Activated CD4-positive, alpha-beta T cell treated with anti-CD3 and anti-CD28 coated beads for 36 hours (primary cell): ENCODE measurements at regions of chr4 and their contacts with region 1.

Region 1: GRCh38 chr4:154551872-154552686 is 1.9 kb upstream of the PLRG1 start:
- DNase-seq: peak; percentile 81
- ATAC-seq: peak; percentile 47
- H3K4me3 Mint-ChIP-seq: no peak overlapping the region
- H3K27ac Mint-ChIP-seq: no peak overlapping the region
- H3K4me1 Mint-ChIP-seq: peaks cover 20% of the 10 kb centered on the region
- H3K27me3 Mint-ChIP-seq: peaks cover 2% of the 10 kb centered on the region

Region 2: GRCh38 chr4:153785910-153786721 is 766.0 kb before region 1 on chr4:
- CTCF ChIA-PET with region 1: no interaction called
- POLR2A ChIA-PET with region 1: no interaction called
- intact Hi-C with region 1: loop called in 1 of 2 experiments (anchors 5 kb)
- DNase-seq: no peak
- ATAC-seq: no peak
- H3K4me3 Mint-ChIP-seq: no peak overlapping the region
- H3K27ac Mint-ChIP-seq: no peak overlapping the region
- H3K4me1 Mint-ChIP-seq: peaks cover 27% of the 10 kb centered on the region
- H3K27me3 Mint-ChIP-seq: peaks cover 65% of the 10 kb centered on the region

Region 3: GRCh38 chr4:154491341-154492271 is 60.5 kb before region 1 on chr4 and contains the start of gene DCHS2:
- CTCF ChIA-PET with region 1: interaction called, 6 read pairs
- POLR2A ChIA-PET with region 1: no interaction called
- intact Hi-C with region 1: loop called in 1 of 2 experiments (anchors 1 kb)
- DNase-seq: peak; percentile 55
- ATAC-seq: peak; percentile 71
- H3K4me3 Mint-ChIP-seq: peak within 1 kb of the TSS; percentile 67
- H3K27ac Mint-ChIP-seq: no peak within 1 kb of the TSS
- H3K4me1 Mint-ChIP-seq: peaks cover 18% of the 10 kb centered on the region
- H3K27me3 Mint-ChIP-seq: peaks cover 55% of the 10 kb centered on the region
- total RNA-seq, gene DCHS2: 0.05 to 0.14 TPM

Region 4: DNA sequence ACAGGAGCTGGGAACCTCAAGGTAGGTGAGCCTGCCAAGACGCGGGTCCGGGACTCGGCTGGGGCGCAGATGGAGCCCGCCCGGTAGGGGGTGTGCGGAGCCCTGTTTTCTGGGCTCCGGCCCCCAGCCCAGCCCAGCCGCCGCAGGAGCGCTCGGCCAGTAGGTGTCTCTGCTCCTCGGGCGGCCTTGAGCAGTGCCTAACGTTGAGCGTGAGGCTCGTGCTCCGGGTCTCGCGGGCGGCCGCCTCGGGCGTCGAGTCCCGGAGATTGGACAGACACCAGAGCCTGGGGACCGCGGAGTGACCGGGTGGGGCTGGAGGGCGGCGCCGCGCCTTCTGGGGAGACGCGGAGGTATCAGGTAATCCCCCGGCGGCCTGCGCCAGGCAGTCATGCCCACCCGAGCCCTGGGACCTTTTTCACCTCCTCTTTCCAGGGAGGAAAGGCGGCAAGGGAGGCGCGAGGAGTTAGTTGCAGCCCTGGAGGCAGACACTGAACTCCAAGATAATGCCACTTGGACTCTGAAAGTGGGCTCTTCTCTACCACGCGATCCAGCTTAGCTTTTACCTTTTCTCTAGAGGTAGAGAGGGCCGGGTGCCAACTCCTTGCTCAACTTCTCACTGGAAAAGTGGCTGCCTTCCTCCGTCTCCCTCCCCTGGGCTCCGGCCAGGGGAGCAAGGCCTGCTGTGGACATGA is 74.9 kb after region 1 on chr4:
- CTCF ChIA-PET with region 1: interaction called, 67 read pairs
- POLR2A ChIA-PET with region 1: no interaction called
- intact Hi-C with region 1: loop called (anchors 1 kb)
- DNase-seq: peak; percentile 80
- ATAC-seq: peak; percentile 98
- H3K4me3 Mint-ChIP-seq: no peak overlapping the region
- H3K27ac Mint-ChIP-seq: no peak overlapping the region
- H3K4me1 Mint-ChIP-seq: no peaks in the 10 kb centered on the region
- H3K27me3 Mint-ChIP-seq: peaks cover 13% of the 10 kb centered on the region

Region 5: DNA sequence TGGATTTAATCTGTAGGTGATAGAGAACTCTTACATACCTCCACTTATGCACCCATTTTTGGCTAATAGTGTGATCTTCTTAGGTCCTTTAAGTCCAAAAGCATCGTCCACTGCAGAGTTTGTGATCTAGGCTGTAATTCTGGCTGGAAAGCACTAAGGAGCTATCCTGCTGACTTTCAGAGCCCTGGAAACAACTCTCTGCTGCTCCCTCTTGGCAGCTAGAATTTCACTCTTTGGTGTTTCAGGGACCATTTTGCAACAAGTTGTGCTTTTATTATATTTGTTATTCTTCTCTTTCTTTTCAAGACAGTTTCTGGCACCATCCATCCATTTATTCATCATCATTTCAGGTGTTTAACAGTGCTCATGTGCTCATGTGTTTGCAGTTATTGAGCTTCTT is 359.0 kb after region 1 on chr4:
- CTCF ChIA-PET with region 1: no interaction called
- POLR2A ChIA-PET with region 1: no interaction called
- intact Hi-C with region 1: no loop called
- DNase-seq: no peak
- ATAC-seq: no peak
- H3K4me3 Mint-ChIP-seq: no peak overlapping the region
- H3K27ac Mint-ChIP-seq: no peak overlapping the region
- H3K4me1 Mint-ChIP-seq: no peaks in the 10 kb centered on the region
- H3K27me3 Mint-ChIP-seq: peaks cover under 1% of the 10 kb centered on the region

Region 6: DNA sequence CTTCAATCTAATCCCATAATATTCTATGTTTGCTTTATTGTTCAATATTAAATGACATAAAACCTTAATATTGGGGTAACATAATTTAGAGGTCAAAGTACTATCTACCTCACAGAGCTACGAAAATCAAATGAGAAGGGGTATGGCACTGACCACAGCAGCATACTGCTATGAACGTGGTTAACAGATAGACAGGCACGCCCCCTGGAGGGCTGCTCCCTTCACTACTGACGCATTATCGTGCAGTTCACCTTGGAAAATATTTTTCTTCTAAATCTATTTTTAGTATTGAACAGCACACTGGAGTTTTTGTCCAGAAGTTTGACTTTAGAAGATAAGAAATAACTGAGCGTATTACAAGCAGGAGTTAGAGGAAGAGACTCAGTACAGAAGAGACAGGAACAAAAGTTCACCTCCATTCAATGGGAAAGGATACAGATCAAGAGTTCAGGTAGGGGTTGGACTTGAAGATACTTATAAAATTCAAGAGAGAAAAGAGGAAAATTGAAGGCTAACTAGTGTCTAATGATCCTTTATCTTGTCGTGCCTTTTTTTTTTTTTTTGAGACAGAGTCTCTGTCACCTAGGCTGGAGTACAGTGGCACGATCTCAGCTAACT is 802.0 kb after region 1 on chr4:
- CTCF ChIA-PET with region 1: no interaction called
- POLR2A ChIA-PET with region 1: no interaction called
- intact Hi-C with region 1: loop called in 1 of 2 experiments (anchors 5 kb)
- DNase-seq: peak; percentile 72
- ATAC-seq: peak; percentile 74
- H3K4me3 Mint-ChIP-seq: no peak overlapping the region
- H3K27ac Mint-ChIP-seq: no peak overlapping the region
- H3K4me1 Mint-ChIP-seq: no peaks in the 10 kb centered on the region
- H3K27me3 Mint-ChIP-seq: no peaks in the 10 kb centered on the region

Region 7: GRCh38 chr4:155376387-155377268 is 824.5 kb after region 1 on chr4 and contains the start of gene MAP9:
- CTCF ChIA-PET with region 1: interaction called, 3 read pairs
- POLR2A ChIA-PET with region 1: no interaction called
- intact Hi-C with region 1: loop called (anchors 1 kb)
- DNase-seq: peak; percentile 94
- ATAC-seq: peak; percentile 96
- H3K4me3 Mint-ChIP-seq: peak within 1 kb of the TSS; percentile 83
- H3K27ac Mint-ChIP-seq: peak within 1 kb of the TSS; percentile 79
- H3K4me1 Mint-ChIP-seq: peaks cover 16% of the 10 kb centered on the region
- H3K27me3 Mint-ChIP-seq: no peaks in the 10 kb centered on the region
- total RNA-seq, gene MAP9: 8.0 to 8.1 TPM

Region 8: DNA sequence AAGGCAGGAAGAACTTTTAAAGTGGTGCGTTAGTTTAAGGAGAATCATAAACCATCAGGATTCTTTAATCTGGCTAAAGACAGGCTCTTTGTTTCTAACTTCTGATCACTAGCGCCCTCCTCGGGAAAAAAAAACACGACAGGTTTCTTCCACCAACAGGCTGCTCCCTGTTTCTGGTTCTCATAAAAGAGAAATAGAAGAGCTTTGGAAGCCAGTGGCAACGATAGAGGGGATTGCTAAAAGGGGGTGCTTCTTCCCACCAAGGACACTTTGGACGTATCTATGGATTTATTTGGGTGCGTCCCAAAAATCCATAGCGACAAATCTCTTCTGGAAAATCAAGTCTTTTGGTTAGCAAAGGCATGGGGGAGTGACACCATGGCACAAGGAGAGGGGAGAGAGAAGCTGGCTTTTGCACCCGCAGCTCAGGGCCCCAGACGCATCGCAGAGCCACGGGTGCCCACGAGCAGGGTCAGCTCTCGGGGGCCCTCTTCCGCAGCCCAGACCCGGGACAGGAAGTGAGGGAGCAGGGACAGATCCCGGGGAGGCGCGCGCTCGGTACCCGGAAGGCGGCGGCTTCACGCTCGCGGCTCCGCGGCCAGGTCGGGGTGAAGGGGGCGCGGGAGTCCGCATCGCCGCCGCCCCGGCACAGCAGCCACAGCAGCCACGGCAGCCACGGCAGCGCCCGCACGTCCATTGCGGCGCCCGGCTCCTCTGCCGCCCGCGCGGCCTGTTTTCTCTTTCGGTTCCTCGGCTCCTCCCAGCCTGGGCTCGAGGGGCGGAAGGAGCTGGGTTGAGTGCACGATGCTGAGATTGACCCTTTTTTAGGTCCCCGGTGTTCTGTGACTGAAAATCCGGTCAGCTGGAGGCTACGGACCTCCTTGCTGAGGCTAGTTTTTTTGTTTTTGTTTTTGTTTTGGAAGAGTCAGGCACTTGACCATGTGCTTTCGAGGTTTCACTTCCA is 1401.4 kb after region 1 on chr4 and contains the start of gene CTSO:
- CTCF ChIA-PET with region 1: no interaction called
- POLR2A ChIA-PET with region 1: no interaction called
- intact Hi-C with region 1: loop called (anchors 2 to 5 kb)
- DNase-seq: peak; percentile 82
- ATAC-seq: peak; percentile 93
- H3K4me3 Mint-ChIP-seq: peak within 1 kb of the TSS; percentile 92
- H3K27ac Mint-ChIP-seq: peak within 1 kb of the TSS; percentile 99
- H3K4me1 Mint-ChIP-seq: peaks cover 11% of the 10 kb centered on the region
- H3K27me3 Mint-ChIP-seq: peaks cover 4% of the 10 kb centered on the region
- total RNA-seq, gene CTSO: 2.6 to 3.0 TPM